GM12878 (cell line): ENCODE measurements at regions of chr17 and their contacts with region 1.

Region 1: DNA sequence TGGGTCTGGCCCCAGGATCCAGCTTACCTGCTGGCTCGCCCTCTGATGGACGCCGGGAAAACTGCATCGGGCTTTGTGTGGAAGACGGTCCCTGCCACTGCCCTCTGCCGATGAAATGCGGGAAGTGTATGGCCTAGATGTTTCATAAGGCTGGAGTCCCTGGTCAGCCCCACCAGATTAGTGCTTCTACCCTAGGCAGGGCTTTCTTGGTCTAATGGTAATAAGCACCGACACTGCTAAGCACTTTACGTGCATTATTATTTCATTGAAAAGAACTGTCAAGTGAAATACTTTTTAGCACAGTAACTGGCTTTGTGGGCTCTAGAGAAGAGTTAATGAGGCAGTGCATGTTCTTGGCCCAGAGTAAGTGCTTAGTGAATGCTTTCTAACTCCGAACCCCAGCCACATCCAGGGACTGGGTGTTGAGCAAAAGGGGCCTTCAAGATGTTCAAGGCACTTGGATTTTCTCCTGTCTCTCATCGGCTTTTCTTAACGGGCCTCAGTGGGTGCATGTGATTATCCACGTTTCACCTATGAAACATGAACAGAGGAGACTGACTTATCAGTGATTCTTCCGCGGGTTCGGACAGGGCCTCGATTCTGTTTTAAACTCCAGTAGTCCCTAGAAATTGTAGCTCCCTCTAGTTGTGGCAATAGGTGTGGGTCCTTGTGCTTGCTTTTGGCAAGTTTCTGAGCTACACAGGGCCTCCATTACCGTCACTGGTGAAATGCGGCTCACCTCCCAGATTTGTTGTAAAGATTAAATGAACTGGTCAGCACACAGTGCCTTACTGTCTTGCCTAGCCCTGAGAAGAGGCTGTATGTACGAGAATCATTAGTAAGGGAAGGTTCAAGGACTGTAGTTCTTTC is 6.6 kb downstream of the TRAF4 start:
- DNase-seq: peak; percentile 69
- ATAC-seq: peak; percentile 78
- H3K4me3 ChIP-seq: 0 out of 2 replicates have a peak overlapping the region, but pooled peaks have one; percentile 17
- H3K27ac ChIP-seq: no peak overlapping the region
- H3K4me1 ChIP-seq: peaks cover 30% of the 10 kb centered on the region
- H3K27me3 ChIP-seq: no peaks in the 10 kb centered on the region
- CTCF ChIP-seq: peak; percentile 100; a peak in 5 of 6 replicates
- EP300 ChIP-seq: no peak
- POLR2A ChIP-seq: peak; percentile 78
- RAD21 ChIP-seq: peak; percentile 76

Region 2: DNA sequence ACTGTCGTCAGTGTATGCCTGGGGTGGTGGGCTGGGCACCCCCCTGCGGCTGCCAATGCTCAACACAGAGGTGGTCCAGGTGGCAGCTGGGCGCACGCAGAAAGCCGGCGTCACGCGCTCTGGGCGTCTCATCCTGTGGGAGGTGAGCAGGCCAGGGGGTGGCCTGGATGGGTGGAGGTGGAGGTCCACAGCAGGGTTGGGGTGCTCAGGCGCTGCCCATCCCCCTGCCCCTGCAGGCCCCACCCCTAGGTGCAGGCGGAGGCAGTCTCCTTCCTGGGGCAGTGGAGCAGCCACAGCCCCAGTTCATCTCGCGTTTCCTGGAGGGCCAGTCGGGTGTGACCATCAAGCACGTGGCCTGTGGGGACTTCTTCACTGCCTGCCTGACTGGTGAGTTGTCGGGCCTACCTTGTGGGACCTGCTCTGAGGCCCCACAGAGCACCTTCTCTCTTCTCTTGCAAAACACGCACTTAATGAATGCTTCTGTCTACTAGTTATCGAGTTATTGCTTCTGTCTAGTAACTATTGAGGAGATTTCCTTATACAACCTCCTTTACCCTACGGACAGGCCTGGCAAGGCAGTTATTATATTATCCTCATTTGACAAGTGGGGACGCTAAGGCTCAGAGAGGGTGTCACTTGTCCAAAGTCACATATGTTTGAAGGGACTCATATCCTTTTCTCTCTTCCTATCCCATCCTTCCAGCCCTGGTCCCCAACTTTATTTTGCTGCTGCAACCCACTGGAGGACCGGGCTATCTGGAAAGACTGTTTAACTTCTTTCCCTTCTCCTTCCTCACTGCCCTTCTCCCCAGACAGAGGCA is 12.3 kb before region 1 on chr17:
- CTCF ChIA-PET with region 1: interaction called, 15 read pairs
- POLR2A ChIA-PET with region 1: interaction called, 485 read pairs
- RAD21 ChIA-PET with region 1: interaction called, 7 read pairs
- SMC1A ChIA-PET with region 1: interaction called, 326 read pairs
- in situ Hi-C with region 1: no loop called
- intact Hi-C with region 1: no loop called
- DNase-seq: peak; percentile 89
- ATAC-seq: peak; percentile 88
- H3K4me3 ChIP-seq: peak overlapping the region; percentile 60
- H3K27ac ChIP-seq: peak overlapping the region; percentile 96
- H3K4me1 ChIP-seq: peaks cover 75% of the 10 kb centered on the region
- H3K27me3 ChIP-seq: no peaks in the 10 kb centered on the region
- CTCF ChIP-seq: no peak
- EP300 ChIP-seq: peak; percentile 45 to 73; a peak in 3 of 4 replicates
- POLR2A ChIP-seq: peak; percentile 83
- RAD21 ChIP-seq: no peak

Region 3: GRCh38 chr17:28812091-28812747 is 61.8 kb after region 1 on chr17:
- CTCF ChIA-PET with region 1: interaction called, 10 read pairs
- POLR2A ChIA-PET with region 1: no interaction called
- RAD21 ChIA-PET with region 1: no interaction called
- SMC1A ChIA-PET with region 1: no interaction called
- in situ Hi-C with region 1: no loop called
- intact Hi-C with region 1: no loop called
- DNase-seq: peak; percentile 78
- ATAC-seq: peak; percentile 100
- H3K4me3 ChIP-seq: peak overlapping the region; percentile 75
- H3K27ac ChIP-seq: peak overlapping the region; percentile 74
- H3K4me1 ChIP-seq: peaks cover 18% of the 10 kb centered on the region
- H3K27me3 ChIP-seq: no peaks in the 10 kb centered on the region
- CTCF ChIP-seq: no peak
- EP300 ChIP-seq: no peak
- POLR2A ChIP-seq: peak; percentile 70; the same call in 1 of the 2 replicates
- RAD21 ChIP-seq: no peak

Region 4: DNA sequence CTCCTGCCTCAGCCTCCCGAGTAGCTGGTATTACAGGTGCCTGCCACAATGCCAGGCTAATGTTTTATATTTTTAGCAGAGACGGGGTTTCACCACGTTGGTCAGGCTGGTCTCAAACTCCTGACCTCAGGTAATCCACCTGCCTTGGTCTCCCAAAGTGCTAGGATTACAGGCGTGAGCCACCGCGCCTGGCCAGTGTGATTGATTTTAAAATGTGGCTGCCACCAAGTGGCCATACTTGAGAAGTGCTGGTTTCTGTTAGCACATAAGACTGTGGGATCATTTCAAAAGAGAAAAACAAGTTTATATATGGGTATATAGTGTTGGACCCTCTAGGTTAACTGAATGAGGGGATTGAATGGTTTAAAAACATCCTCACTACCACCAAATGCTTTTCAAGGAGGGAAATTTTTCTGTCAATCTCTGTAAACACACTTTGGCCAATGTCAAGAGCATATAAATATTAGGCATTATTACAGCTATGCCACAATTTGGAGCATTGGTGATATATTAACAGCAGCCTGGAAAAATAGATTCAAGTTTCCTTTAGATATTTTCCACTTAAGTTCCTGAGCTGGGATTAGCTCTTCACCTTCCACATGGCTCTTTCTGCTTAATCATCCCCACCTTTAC is 166.0 kb after region 1 on chr17:
- CTCF ChIA-PET with region 1: interaction called, 12 read pairs
- POLR2A ChIA-PET with region 1: no interaction called
- RAD21 ChIA-PET with region 1: no interaction called
- SMC1A ChIA-PET with region 1: interaction called, 4 read pairs
- in situ Hi-C with region 1: no loop called
- intact Hi-C with region 1: no loop called
- DNase-seq: no peak
- ATAC-seq: peak; percentile 89
- H3K4me3 ChIP-seq: no peak overlapping the region
- H3K27ac ChIP-seq: no peak overlapping the region
- H3K4me1 ChIP-seq: no peaks in the 10 kb centered on the region
- H3K27me3 ChIP-seq: no peaks in the 10 kb centered on the region
- CTCF ChIP-seq: peak; percentile 55 to 59 (median 57)
- EP300 ChIP-seq: no peak
- POLR2A ChIP-seq: no peak
- RAD21 ChIP-seq: peak; percentile 58